Activated CD4-positive, alpha-beta memory T cell treated with anti-CD3 and anti-CD28 coated beads, Interleukin-2, amount 10 ng/mL, durations not matched to agents 7 days and 5 days (primary cell): ENCODE measurements at regions of chr11 and their contacts with region 1.

Region 1: DNA sequence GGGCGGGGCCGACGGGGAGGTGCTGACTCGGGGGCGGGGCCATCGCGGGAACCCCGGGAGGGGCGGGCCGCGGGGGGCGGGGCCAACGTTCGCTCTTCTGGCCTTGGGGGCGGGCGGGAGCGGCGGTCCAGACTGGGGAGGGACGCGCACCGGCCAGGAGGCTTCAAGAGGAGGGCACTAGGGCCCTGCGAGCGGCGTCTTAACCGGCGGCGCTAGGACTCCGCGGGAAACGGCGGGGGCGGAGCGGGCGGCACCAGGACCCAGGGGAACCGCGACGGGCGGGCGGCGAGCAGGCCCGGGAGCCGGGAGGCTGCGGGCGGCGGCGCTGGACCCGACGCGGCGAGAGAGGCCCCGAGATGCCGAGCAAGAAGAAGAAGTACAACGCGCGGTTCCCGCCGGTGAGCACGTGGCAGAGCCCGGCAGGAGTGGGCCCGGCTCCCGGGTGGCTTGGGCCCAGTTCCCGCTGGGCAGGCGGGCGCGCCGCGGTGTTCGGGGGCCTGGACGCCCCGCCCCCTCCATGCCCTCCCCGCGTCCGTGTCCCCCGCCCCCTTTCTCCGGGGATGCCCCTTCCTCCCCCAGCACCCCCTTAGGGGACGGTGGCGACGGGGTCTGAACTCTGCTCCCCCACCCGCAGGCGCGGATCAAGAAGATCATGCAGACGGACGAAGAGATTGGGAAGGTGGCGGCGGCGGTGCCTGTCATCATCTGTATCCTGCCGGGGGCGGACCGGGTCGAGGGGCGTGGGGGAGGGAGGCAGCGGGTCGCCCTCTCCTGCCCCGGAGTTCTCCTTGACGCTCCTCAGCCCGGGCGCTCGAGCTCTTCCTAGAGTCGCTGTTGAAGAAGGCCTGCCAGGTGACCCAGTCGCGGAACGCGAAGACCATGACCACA is at the start of gene DRAP1:
- DNase-seq: peak; percentile 99
- H3K4me3 Mint-ChIP-seq: peak within 1 kb of the TSS; percentile 93
- H3K27ac Mint-ChIP-seq: peak within 1 kb of the TSS; percentile 87
- H3K4me1 Mint-ChIP-seq: peaks cover 42% of the 10 kb centered on the region
- H3K27me3 Mint-ChIP-seq: no peaks in the 10 kb centered on the region
- total RNA-seq, gene DRAP1: 162 to 180 TPM

Region 2: DNA sequence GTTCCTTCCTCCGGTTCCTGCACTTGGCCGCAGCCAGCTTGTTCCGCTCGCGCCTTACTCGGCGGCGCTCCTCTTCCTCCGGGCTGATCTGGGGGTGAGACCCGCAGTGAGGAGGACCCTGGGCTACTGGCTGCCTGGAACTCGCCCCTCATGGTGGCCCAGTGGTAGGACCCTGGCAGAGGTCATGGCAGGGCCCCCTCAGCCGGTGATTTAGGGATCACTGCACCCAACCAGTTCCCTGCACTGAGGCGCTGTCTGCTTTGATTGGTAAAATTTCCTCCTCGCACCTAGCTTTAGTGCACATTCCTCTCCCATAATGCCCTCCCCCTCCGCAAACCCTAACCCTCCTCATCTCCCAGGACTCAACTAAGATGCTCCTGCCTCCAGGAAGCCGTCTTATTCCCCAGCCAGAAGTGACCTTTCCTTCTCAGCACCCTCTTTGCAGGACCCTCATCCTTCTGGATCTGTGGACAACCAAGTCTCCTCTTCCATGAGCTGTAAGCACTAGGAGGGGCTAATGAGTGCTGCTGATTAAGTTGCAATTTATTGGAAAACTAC is 25.3 kb before region 1 on chr11:
- CTCF ChIA-PET with region 1: interaction called, 18 read pairs
- POLR2A ChIA-PET with region 1: interaction called, 50 read pairs
- DNase-seq: peak; percentile 67
- H3K4me3 Mint-ChIP-seq: peak overlapping the region; percentile 97
- H3K27ac Mint-ChIP-seq: peak overlapping the region; percentile 89
- H3K4me1 Mint-ChIP-seq: peaks cover 69% of the 10 kb centered on the region
- H3K27me3 Mint-ChIP-seq: no peaks in the 10 kb centered on the region

Region 3: DNA sequence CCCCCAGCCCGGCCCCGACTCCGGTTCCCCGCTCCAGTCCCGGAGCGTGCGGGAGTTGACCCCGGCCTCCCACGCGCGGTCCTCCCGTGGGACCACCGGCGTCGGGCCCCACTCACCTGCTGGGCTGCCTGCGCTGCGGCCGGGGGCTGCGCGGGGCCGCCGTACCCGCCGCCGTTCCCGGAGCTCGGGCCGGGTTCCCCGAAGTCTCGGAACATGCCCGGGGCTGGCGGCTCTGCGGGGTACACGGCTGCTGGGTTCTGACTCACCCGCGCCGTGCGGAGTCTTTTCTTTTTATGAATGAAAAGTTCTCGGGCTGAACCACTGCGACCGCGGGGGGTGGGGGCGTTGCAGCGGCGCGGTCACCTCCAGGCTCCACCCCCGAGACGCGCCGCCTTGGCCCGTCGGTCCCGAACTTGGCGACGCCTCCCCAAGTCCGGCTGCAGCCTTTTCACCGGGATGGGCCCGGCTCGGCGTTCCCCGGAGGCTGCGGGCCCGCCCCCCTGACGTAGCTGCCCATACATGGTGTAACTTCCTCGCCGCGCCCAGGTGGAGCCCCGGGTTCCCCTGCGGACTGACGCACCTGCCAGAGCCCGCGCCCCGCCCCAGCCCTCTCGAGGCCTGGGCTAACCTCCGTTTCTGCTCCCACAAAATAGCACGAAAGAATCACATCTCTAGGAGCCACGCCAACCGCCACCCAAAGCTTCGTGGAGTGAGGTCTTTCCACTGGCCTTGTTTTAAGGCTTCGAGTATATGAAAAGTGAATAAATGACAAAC is 19.1 kb before region 1 on chr11 and contains the start of gene FOSL1:
- CTCF ChIA-PET with region 1: interaction called, 6 read pairs
- POLR2A ChIA-PET with region 1: interaction called, 41 read pairs
- DNase-seq: peak; percentile 93
- H3K4me3 Mint-ChIP-seq: peak within 1 kb of the TSS; percentile 69
- H3K27ac Mint-ChIP-seq: peak within 1 kb of the TSS; percentile 73
- H3K4me1 Mint-ChIP-seq: peaks cover 55% of the 10 kb centered on the region
- H3K27me3 Mint-ChIP-seq: peaks cover 4% of the 10 kb centered on the region
- total RNA-seq, gene FOSL1: 4.5 to 5.0 TPM

Region 4: GRCh38 chr11:65906602-65907001 is 12.8 kb before region 1 on chr11:
- CTCF ChIA-PET with region 1: interaction called, 6 read pairs
- POLR2A ChIA-PET with region 1: interaction called, 41 read pairs
- DNase-seq: no peak
- H3K4me3 Mint-ChIP-seq: no peak overlapping the region
- H3K27ac Mint-ChIP-seq: no peak overlapping the region
- H3K4me1 Mint-ChIP-seq: peaks cover 21% of the 10 kb centered on the region
- H3K27me3 Mint-ChIP-seq: peaks cover 12% of the 10 kb centered on the region

Region 5: GRCh38 chr11:65961232-65961901 is 42.0 kb after region 1 on chr11 and contains the start of gene SART1:
- CTCF ChIA-PET with region 1: no interaction called
- POLR2A ChIA-PET with region 1: interaction called, 11 read pairs
- DNase-seq: peak; percentile 96
- H3K4me3 Mint-ChIP-seq: peak within 1 kb of the TSS; percentile 98
- H3K27ac Mint-ChIP-seq: peak within 1 kb of the TSS; percentile 96
- H3K4me1 Mint-ChIP-seq: peaks cover 52% of the 10 kb centered on the region
- H3K27me3 Mint-ChIP-seq: no peaks in the 10 kb centered on the region
- total RNA-seq, gene SART1: 59.5 to 61.5 TPM